ENCODE measurements at regions of chr10 and their contacts with region 1.

Region 1: GRCh38 chr10:74244097-74244685 is 93.2 kb downstream of the ADK start:
- DNase-seq: peak in 1 of 2 experiments; percentile 53
- H3K4me3 ChIP-seq: no peak overlapping the region
- H3K27ac ChIP-seq: no peak overlapping the region
- H3K4me1 ChIP-seq: no peaks in the 10 kb centered on the region
- H3K27me3 ChIP-seq: no peaks in the 10 kb centered on the region
- CTCF ChIP-seq: peak; percentile 79

Region 2: GRCh38 chr10:73517271-73517877 is 726.8 kb before region 1 on chr10:
- CTCF ChIA-PET with region 1: no interaction called
- POLR2A ChIA-PET with region 1: interaction called, 12 read pairs
- intact Hi-C with region 1: no loop called
- DNase-seq: peak in 1 of 2 experiments; percentile 27
- H3K4me3 ChIP-seq: no peak overlapping the region
- H3K27ac ChIP-seq: no peak overlapping the region
- H3K4me1 ChIP-seq: no peaks in the 10 kb centered on the region
- H3K27me3 ChIP-seq: no peaks in the 10 kb centered on the region
- CTCF ChIP-seq: no peak

Region 3: DNA sequence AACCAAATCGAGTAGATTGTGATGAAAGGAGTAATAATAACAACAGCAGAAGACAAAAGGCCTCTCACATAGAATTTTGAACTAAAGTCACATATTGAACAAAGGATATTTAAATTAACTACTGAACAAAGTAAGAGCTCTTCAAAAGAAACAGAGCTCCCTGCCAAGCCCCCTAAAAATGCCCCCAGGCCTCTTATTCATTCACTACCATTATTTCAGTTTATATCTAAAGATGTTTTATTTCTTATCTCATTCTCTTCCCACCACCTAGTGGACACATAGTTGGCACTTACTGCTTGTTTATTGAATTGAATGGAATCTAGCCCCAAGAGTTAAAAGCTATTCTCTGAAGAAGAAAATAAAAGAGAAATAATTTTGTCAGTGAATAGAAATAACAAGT is 208.9 kb before region 1 on chr10:
- CTCF ChIA-PET with region 1: no interaction called
- POLR2A ChIA-PET with region 1: no interaction called
- intact Hi-C with region 1: no loop called
- DNase-seq: no peak
- H3K4me3 ChIP-seq: no peak overlapping the region
- H3K27ac ChIP-seq: 0 out of 2 replicates have a peak overlapping the region, but pooled peaks have one; percentile 24
- H3K4me1 ChIP-seq: no peaks in the 10 kb centered on the region
- H3K27me3 ChIP-seq: no peaks in the 10 kb centered on the region
- CTCF ChIP-seq: peak; percentile 44

Region 4: GRCh38 chr10:74047868-74048267 is 196.3 kb before region 1 on chr10:
- CTCF ChIA-PET with region 1: no interaction called
- POLR2A ChIA-PET with region 1: no interaction called
- intact Hi-C with region 1: no loop called
- DNase-seq: peak; percentile 61 to 89
- H3K4me3 ChIP-seq: peak overlapping the region; percentile 29; the same call in 1 of the 2 replicates
- H3K27ac ChIP-seq: peak overlapping the region; percentile 90
- H3K4me1 ChIP-seq: peaks cover 62% of the 10 kb centered on the region
- H3K27me3 ChIP-seq: no peaks in the 10 kb centered on the region
- CTCF ChIP-seq: no peak

Region 5: GRCh38 chr10:74208091-74208524 is 36.1 kb before region 1 on chr10:
- CTCF ChIA-PET with region 1: interaction called, 15 read pairs
- POLR2A ChIA-PET with region 1: no interaction called
- intact Hi-C with region 1: no loop called
- DNase-seq: no peak
- H3K4me3 ChIP-seq: no peak overlapping the region
- H3K27ac ChIP-seq: no peak overlapping the region
- H3K4me1 ChIP-seq: peaks cover 17% of the 10 kb centered on the region
- H3K27me3 ChIP-seq: no peaks in the 10 kb centered on the region
- CTCF ChIP-seq: no peak

Region 6: DNA sequence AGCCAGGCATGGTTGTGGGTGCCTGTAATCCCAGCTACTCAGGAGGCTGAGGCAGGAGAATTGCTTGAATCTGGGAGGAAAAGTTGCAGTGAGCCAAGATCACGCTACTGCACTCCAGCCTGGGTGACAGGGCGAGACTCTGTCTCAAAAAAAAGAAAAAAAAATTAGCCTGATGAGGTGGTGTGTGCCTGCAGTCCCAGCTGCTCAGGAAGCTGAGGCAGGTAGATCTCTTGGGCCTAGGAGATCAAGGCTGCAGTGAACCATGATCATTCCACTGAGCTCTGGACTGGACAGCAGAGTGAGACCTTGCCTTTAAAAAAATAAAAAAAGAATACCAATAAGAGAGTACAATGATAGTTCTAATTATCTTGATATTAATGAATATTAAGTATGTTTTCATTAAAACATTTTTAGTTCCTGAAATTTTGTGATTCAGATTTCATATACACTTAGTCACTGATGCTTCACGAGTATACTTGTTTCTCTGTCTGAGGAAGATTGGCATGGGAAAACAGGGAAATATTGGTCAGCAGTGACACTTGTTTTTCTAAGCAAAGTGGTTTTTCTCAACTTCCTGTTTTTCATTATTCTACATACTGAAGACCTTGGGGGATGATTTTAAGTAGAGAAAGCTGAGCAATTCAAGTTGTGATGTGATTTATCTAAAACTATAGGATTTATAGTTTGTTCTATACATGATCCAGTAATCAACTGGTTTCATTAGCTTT is 16.3 kb before region 1 on chr10:
- CTCF ChIA-PET with region 1: no interaction called
- POLR2A ChIA-PET with region 1: no interaction called
- intact Hi-C with region 1: no loop called
- DNase-seq: peak in 1 of 2 experiments; percentile 39
- H3K4me3 ChIP-seq: no peak overlapping the region
- H3K27ac ChIP-seq: peak overlapping the region; percentile 66
- H3K4me1 ChIP-seq: peaks cover 62% of the 10 kb centered on the region
- H3K27me3 ChIP-seq: no peaks in the 10 kb centered on the region
- CTCF ChIP-seq: no peak

Region 7: GRCh38 chr10:74255214-74255613 is 11.0 kb after region 1 on chr10:
- CTCF ChIA-PET with region 1: interaction called, 13 read pairs
- POLR2A ChIA-PET with region 1: no interaction called
- intact Hi-C with region 1: no loop called
- DNase-seq: peak in 1 of 2 experiments; percentile 51
- H3K4me3 ChIP-seq: no peak overlapping the region
- H3K27ac ChIP-seq: peak overlapping the region; percentile 29
- H3K4me1 ChIP-seq: peaks cover 24% of the 10 kb centered on the region
- H3K27me3 ChIP-seq: no peaks in the 10 kb centered on the region
- CTCF ChIP-seq: no peak

Region 8: GRCh38 chr10:75019370-75019769 is 775.2 kb after region 1 on chr10:
- CTCF ChIA-PET with region 1: no interaction called
- POLR2A ChIA-PET with region 1: no interaction called
- intact Hi-C with region 1: loop called (anchors 1 kb)
- DNase-seq: peak in 1 of 2 experiments; percentile 43
- H3K4me3 ChIP-seq: no peak overlapping the region
- H3K27ac ChIP-seq: no peak overlapping the region
- H3K4me1 ChIP-seq: no peaks in the 10 kb centered on the region
- H3K27me3 ChIP-seq: no peaks in the 10 kb centered on the region
- CTCF ChIP-seq: peak; percentile 64

Region 9: GRCh38 chr10:75099952-75100763 is 856.0 kb after region 1 on chr10:
- CTCF ChIA-PET with region 1: interaction called, 10 read pairs
- POLR2A ChIA-PET with region 1: no interaction called
- intact Hi-C with region 1: loop called (anchors 1 kb)
- DNase-seq: peak; percentile 52 to 84
- H3K4me3 ChIP-seq: no peak overlapping the region
- H3K27ac ChIP-seq: no peak overlapping the region
- H3K4me1 ChIP-seq: no peaks in the 10 kb centered on the region
- H3K27me3 ChIP-seq: no peaks in the 10 kb centered on the region
- CTCF ChIP-seq: peak; percentile 94